Spleen (tissue), 13 donors: ENCODE measurements at regions of chr3 and their contacts with region 1.

Region 1: GRCh38 chr3:184543843-184544512 is 17.6 kb upstream of the EPHB3 start:
- DNase-seq: peak; percentile 83
- H3K4me3 ChIP-seq: peak overlapping the region in 1 of 8 donors; percentile 23
- H3K27ac ChIP-seq: no peak overlapping the region
- H3K4me1 ChIP-seq: peaks cover 0 to 28% (median 14%) of the 10 kb centered on the region in 6 donors
- H3K27me3 ChIP-seq: peaks cover 0 to 43% (median 13%) of the 10 kb centered on the region in 7 donors
- CTCF ChIP-seq: peak; percentile 72 to 95 (median 90)
- POLR2A ChIP-seq: no peak

Region 2: GRCh38 chr3:184371570-184372018 is 172.4 kb before region 1 on chr3:
- intact Hi-C with region 1: loop called (anchors 5 kb)
- DNase-seq: peak; percentile 86
- H3K4me3 ChIP-seq: no peak overlapping the region
- H3K27ac ChIP-seq: peak overlapping the region in 3 of 8 donors; percentile 9 to 29 (median 22)
- H3K4me1 ChIP-seq: peaks cover 6 to 41% (median 16%) of the 10 kb centered on the region in 6 donors
- H3K27me3 ChIP-seq: peaks cover 0 to 9% (median 0%) of the 10 kb centered on the region in 7 donors
- CTCF ChIP-seq: peak; percentile 71 to 92 (median 86)
- POLR2A ChIP-seq: no peak

Region 3: GRCh38 chr3:184417619-184418327 is 126.2 kb before region 1 on chr3:
- intact Hi-C with region 1: loop called (anchors 2 kb)
- DNase-seq: peak; percentile 91
- H3K4me3 ChIP-seq: no peak overlapping the region
- H3K27ac ChIP-seq: no peak overlapping the region
- H3K4me1 ChIP-seq: peaks cover 0 to 6% (median 4%) of the 10 kb centered on the region in 6 donors
- H3K27me3 ChIP-seq: no peaks in the 10 kb centered on the region
- CTCF ChIP-seq: peak; percentile 75 to 95 (median 90)
- POLR2A ChIP-seq: no peak

Region 4: DNA sequence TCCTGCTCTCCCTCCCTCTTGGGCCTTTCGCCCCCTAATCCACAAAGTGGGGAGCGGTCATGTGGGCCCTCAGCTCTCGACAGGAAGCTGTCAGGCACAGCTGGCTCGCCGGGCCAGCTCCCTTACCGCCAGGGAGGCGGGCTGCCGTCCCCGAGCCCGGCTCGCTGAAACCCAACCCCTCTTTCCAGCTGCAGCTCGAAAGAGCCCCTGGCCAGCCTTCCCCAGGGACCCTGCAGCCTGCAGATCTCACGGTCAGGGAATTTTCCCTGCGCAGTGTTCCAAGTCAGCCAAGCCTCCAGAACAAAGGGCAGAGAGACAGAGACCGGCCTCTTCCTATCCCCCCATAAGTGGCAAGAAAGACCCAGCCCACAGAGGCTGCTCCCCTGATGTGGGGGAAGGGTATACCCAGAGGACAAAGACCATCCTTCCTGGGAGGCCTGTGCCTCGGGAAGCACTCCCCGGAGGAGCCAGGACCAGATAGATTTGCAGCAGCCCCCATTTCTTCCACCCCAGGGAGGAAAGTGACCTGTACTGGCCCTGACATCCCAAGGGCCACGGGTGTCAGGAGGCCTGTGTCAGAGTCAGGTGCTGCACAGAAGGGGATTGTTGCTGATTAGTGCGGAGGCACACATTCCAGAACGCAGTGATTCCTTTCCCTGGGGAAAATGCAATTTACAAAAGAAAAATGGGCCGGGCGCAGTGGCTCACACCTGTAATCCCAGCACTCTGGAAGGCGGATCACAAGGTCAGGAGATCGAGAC is 135.3 kb after region 1 on chr3:
- intact Hi-C with region 1: no loop called
- DNase-seq: no peak
- H3K4me3 ChIP-seq: no peak overlapping the region
- H3K27ac ChIP-seq: no peak overlapping the region
- H3K4me1 ChIP-seq: peaks cover 5 to 39% (median 29%) of the 10 kb centered on the region in 6 donors
- H3K27me3 ChIP-seq: no peaks in the 10 kb centered on the region
- CTCF ChIP-seq: no peak
- POLR2A ChIP-seq: no peak